ENCODE measurements at regions of chr2 and their contacts with region 1.

Region 1: DNA sequence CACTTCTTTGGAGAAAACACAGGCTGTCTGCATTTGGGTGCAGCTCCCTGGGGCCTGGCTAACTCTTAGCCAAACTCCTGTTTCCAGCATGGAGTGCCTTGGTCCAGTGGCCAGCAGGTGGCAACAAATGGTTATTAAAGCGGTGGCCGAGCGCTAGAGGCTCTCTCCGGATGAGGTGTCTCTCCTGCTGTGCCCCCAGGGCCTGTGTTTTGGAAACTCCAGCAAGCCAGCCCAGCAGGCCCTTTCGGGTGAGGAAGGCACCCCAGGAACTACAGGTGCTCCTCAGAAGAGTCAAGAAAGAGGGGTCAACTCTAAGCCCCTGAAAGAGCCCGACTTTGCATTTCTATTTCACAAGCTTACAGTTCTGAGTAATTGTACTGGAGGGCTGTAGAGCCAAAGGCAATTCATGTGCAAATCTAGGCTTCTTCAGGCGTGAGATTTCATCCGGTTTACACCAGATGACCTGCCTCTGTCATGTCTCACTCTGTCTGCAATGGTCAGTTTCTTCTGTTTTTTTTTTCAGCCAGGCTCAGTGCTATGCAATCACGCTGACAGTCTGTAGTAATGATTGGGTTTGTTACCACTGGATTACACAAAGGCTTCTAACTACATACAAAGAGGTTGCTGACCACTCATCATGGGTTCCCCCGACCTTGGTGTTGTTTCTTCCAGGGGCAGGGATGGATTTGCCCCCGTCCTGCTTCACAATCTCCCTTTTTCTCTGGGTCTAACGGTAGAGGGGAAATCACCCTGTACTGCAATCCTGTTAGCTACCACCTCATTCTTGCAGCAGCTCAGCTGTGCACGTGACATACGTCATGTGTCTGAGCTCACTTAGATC is 7.6 kb upstream of the CHRNA1 start:
- DNase-seq: peak in 6 of 9 experiments; percentile 23 to 68 (median 51)
- ATAC-seq: peak; percentile 60
- H3K4me3 ChIP-seq: no peak overlapping the region
- H3K4me3 Mint-ChIP-seq: no peak overlapping the region
- H3K27ac ChIP-seq: no peak overlapping the region
- H3K27ac Mint-ChIP-seq: peak overlapping the region; percentile 3
- H3K4me1 ChIP-seq: peaks cover 14% of the 10 kb centered on the region
- H3K4me1 Mint-ChIP-seq: peaks cover 21% of the 10 kb centered on the region
- H3K27me3 ChIP-seq: no peaks in the 10 kb centered on the region
- H3K27me3 Mint-ChIP-seq: no peaks in the 10 kb centered on the region
- CTCF ChIP-seq: no peak

Region 2: GRCh38 chr2:174492963-174493431 is 278.9 kb before region 1 on chr2:
- CTCF ChIA-PET with region 1: no interaction called
- POLR2A ChIA-PET with region 1: no interaction called
- intact Hi-C with region 1: loop called in 1 of 2 experiments (anchors 10 kb)
- DNase-seq: peak; percentile 34 to 94 (median 64)
- ATAC-seq: peak; percentile 85
- H3K4me3 ChIP-seq: peak overlapping the region; percentile 27 to 47
- H3K4me3 Mint-ChIP-seq: peak overlapping the region; percentile 85
- H3K27ac ChIP-seq: peak overlapping the region; percentile 71 to 88
- H3K27ac Mint-ChIP-seq: peak overlapping the region; percentile 97
- H3K4me1 ChIP-seq: peaks cover 71% of the 10 kb centered on the region
- H3K4me1 Mint-ChIP-seq: peaks cover 83% of the 10 kb centered on the region
- H3K27me3 ChIP-seq: no peaks in the 10 kb centered on the region
- H3K27me3 Mint-ChIP-seq: no peaks in the 10 kb centered on the region
- CTCF ChIP-seq: no peak

Region 3: DNA sequence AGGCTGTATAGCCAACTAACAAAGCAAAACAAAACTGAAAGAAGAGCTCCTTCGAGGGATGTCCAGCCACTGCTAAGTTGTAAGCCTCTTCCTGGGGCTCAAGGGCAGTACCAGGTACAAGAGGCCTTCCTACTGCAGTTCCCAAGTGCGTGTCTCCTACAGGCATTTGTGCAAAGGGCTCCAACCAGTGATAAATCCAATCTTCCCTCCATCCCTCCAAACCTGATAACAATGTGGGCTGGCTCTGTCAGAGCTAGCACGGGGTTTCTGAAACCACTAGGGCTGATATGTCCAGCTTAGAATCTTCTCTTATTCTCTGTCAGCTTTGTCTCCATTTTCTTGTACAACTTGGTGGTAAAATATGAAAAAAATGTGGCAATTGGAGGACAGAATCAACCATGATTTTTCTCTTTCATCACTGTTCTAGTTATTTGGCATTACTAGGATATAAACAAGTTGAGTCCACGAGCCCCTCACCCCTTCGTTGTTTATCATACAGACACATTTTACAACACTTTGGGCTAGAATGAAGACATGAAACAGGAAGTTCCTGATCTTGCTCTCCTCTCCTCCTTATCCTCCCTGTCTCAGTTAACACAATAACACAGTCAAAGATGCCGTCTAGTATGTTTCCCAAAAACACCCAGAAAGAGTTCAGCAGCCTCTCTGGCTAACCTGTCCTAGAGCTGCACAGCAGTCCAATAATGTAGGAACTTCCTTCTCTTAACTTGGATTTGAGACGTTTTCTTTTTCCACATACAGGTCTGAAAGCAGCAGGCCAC is 138.8 kb before region 1 on chr2:
- CTCF ChIA-PET with region 1: no interaction called
- POLR2A ChIA-PET with region 1: no interaction called
- intact Hi-C with region 1: no loop called
- DNase-seq: peak in 3 of 9 experiments; percentile 21 to 63 (median 35)
- ATAC-seq: peak; percentile 21
- H3K4me3 ChIP-seq: peak overlapping the region; percentile 70 to 71
- H3K4me3 Mint-ChIP-seq: peak overlapping the region; percentile 95
- H3K27ac ChIP-seq: peak overlapping the region; percentile 49 to 90
- H3K27ac Mint-ChIP-seq: peak overlapping the region; percentile 98
- H3K4me1 ChIP-seq: peaks cover 58% of the 10 kb centered on the region
- H3K4me1 Mint-ChIP-seq: peaks cover 73% of the 10 kb centered on the region
- H3K27me3 ChIP-seq: no peaks in the 10 kb centered on the region
- H3K27me3 Mint-ChIP-seq: no peaks in the 10 kb centered on the region
- CTCF ChIP-seq: no peak

Region 4: GRCh38 chr2:174663550-174663949 is 108.3 kb before region 1 on chr2:
- CTCF ChIA-PET with region 1: no interaction called
- POLR2A ChIA-PET with region 1: no interaction called
- intact Hi-C with region 1: no loop called
- DNase-seq: no peak
- ATAC-seq: no peak
- H3K4me3 ChIP-seq: no peak overlapping the region
- H3K4me3 Mint-ChIP-seq: no peak overlapping the region
- H3K27ac ChIP-seq: no peak overlapping the region
- H3K27ac Mint-ChIP-seq: no peak overlapping the region
- H3K4me1 ChIP-seq: peaks cover 22% of the 10 kb centered on the region
- H3K4me1 Mint-ChIP-seq: peaks cover 43% of the 10 kb centered on the region
- H3K27me3 ChIP-seq: no peaks in the 10 kb centered on the region
- H3K27me3 Mint-ChIP-seq: no peaks in the 10 kb centered on the region
- CTCF ChIP-seq: no peak

Region 5: DNA sequence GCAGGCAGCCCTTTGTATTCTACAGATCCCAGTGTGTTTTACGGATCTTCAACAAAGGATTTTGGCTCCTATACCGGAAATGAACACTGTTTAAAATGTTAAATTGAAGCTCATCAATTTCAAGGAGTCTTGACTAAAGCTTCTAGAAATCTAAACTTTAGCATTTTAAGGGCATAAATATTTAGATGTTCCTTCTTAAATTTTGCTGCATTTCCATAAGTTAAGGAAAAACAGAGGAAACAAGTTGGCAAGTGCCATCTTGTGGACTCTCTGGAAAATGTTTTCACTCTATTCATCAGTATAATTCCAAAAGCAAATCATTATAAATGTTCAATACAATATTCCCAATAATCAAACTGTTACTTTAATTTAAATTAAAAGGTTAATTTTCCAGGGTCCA is 213.8 kb after region 1 on chr2:
- CTCF ChIA-PET with region 1: interaction called, 64 read pairs
- POLR2A ChIA-PET with region 1: no interaction called
- intact Hi-C with region 1: loop called in 1 of 2 experiments (anchors 1 kb)
- DNase-seq: no peak
- ATAC-seq: no peak
- H3K4me3 ChIP-seq: no peak overlapping the region
- H3K4me3 Mint-ChIP-seq: no peak overlapping the region
- H3K27ac ChIP-seq: no peak overlapping the region
- H3K27ac Mint-ChIP-seq: no peak overlapping the region
- H3K4me1 ChIP-seq: no peaks in the 10 kb centered on the region
- H3K4me1 Mint-ChIP-seq: peaks cover 6% of the 10 kb centered on the region
- H3K27me3 ChIP-seq: no peaks in the 10 kb centered on the region
- H3K27me3 Mint-ChIP-seq: peaks cover 4% of the 10 kb centered on the region
- CTCF ChIP-seq: no peak

Region 6: DNA sequence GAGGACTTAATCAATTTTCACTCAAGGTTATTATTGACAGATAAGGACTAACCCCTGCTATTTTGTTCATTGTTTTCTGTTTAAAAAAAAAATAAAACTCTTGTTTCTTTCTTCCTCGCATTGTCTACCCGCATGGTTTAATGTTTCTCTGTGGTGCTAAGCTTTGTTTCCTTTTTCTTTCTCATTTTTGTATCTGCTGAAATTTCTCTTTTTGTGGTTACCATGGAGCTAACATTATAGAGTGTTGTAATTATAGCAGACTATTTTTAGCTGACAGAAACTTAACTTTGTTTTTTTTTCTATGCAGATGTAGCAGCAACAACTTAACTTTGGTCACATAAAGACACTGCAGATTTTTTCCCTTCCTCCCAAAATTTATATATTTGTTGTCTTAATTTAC is 276.4 kb after region 1 on chr2:
- CTCF ChIA-PET with region 1: no interaction called
- POLR2A ChIA-PET with region 1: no interaction called
- intact Hi-C with region 1: no loop called
- DNase-seq: no peak
- ATAC-seq: no peak
- H3K4me3 ChIP-seq: no peak overlapping the region
- H3K4me3 Mint-ChIP-seq: no peak overlapping the region
- H3K27ac ChIP-seq: no peak overlapping the region
- H3K27ac Mint-ChIP-seq: no peak overlapping the region
- H3K4me1 ChIP-seq: no peaks in the 10 kb centered on the region
- H3K4me1 Mint-ChIP-seq: peaks cover 3% of the 10 kb centered on the region
- H3K27me3 ChIP-seq: no peaks in the 10 kb centered on the region
- H3K27me3 Mint-ChIP-seq: no peaks in the 10 kb centered on the region
- CTCF ChIP-seq: no peak

Region 7: DNA sequence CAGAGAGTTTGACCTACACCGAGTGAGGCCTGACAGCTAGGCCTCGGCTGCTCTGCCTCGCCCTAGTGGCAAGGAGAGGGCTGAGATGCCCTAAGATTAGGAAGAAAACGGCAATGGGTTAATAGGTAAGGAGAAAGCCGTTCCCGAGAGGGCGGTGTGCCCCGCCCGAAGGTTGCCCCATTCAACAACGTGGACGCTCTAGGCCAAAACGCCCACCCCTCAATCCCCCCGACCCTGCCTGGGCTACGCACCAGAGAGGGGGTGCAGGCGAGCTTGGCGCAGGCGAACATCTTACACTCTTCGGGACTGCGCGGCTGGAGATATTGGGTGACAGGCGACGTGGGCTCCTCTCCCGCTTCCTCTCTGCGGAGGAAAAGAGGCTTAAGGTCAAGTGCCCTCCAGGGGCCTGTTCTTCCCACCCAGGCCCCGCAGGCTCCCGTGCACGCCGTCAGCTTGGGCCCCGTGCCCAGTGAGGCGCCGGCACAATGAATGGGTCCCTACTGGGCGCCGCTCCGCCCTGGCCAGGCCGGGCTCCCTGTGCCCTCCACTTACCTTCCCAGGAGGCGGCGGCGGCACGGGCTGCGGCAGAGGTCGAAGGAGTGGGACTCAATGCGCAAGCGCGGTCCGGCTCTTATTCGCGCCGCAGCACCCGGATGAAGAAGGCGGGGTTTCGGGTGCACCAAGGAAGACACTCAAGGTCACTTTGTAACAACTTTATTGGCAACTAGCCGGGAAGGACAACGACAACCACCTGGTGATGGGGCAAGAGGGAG is 409.4 kb after region 1 on chr2 and contains the start of gene ATP5MC3:
- CTCF ChIA-PET with region 1: no interaction called
- POLR2A ChIA-PET with region 1: no interaction called
- intact Hi-C with region 1: loop called in 1 of 2 experiments (anchors 10 kb)
- DNase-seq: peak; percentile 80 to 97 (median 92)
- ATAC-seq: peak; percentile 90
- H3K4me3 ChIP-seq: peak within 1 kb of the TSS; percentile 88 to 96
- H3K4me3 Mint-ChIP-seq: peak within 1 kb of the TSS; percentile 94
- H3K27ac ChIP-seq: peak within 1 kb of the TSS; percentile 73 to 76
- H3K27ac Mint-ChIP-seq: peak within 1 kb of the TSS; percentile 87
- H3K4me1 ChIP-seq: peaks cover 13% of the 10 kb centered on the region
- H3K4me1 Mint-ChIP-seq: peaks cover 27% of the 10 kb centered on the region
- H3K27me3 ChIP-seq: no peaks in the 10 kb centered on the region
- H3K27me3 Mint-ChIP-seq: no peaks in the 10 kb centered on the region
- CTCF ChIP-seq: no peak
- total RNA-seq, gene ATP5MC3: 70.2 to 73.4 TPM